SK-N-SH (cell line): ENCODE measurements at regions of chr17 and their contacts with region 1.

Region 1: GRCh38 chr17:58417300-58418092 is at the start of gene RNF43:
- DNase-seq: peak; percentile 90
- H3K4me3 ChIP-seq: peak within 1 kb of the TSS; percentile 33 to 50
- H3K27ac ChIP-seq: no peak within 1 kb of the TSS
- H3K4me1 ChIP-seq: peaks cover 0 to 6% of the 10 kb centered on the region in 2 experiments; a peak in 2 of 4 replicates
- H3K27me3 ChIP-seq: peaks cover 20% of the 10 kb centered on the region
- CTCF ChIP-seq: peak; percentile 79
- EP300 ChIP-seq: no peak
- RAD21 ChIP-seq: peak; percentile 87
- polyA plus RNA-seq, gene RNF43: not detected in 2 replicates

Region 2: DNA sequence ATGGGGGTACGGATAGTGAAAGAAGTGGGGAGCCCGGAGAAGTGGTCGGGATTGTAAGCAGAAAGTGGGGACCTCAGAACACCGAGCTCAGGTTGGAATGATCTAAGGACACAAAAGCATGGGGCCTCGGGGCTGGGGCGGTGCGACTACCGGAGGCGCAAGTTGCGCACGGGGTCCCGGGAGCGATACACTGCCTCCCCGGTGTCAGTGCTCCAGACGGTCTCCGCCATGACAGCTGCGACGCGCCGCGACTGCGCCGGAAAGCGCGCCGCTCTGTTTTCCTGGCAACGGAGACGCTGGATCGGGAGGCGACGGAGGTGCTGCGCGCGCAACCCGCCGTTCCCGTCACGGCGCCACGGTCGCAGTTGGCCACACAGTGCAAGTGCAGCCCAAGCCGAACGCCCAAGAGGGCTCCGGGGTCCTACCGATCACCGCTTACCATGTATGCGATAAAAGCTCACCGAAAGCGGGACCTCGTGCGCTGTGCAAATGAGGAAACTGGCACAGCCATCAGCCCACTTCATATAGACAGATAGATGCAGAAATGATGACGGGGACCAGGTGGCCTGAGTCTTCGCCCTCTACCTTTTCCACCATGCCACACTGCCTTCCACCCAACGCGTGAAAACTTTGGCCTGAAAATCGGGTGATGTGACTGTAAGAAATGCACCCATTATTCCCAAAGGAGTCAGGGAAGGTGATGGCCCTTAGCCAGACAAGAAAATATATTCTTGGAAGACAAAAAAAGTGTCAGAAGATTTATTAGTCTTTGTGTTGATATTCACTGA is 198.3 kb before region 1 on chr17 and contains the start of gene MKS1:
- CTCF ChIA-PET with region 1: interaction called, 13 read pairs
- POLR2A ChIA-PET with region 1: no interaction called
- DNase-seq: peak; percentile 100
- H3K4me3 ChIP-seq: peak within 1 kb of the TSS; percentile 79 to 87
- H3K27ac ChIP-seq: peak within 1 kb of the TSS; percentile 48 to 66
- H3K4me1 ChIP-seq: peaks cover 2 to 10% of the 10 kb centered on the region in 2 experiments; a peak in 1 of 4 replicates
- H3K27me3 ChIP-seq: no peaks in the 10 kb centered on the region
- CTCF ChIP-seq: peak; percentile 61
- EP300 ChIP-seq: no peak
- RAD21 ChIP-seq: no peak
- polyA plus RNA-seq, gene MKS1: 28.5 and 32.8 TPM in 2 replicates

Region 3: GRCh38 chr17:58310516-58311428 is 106.7 kb before region 1 on chr17:
- CTCF ChIA-PET with region 1: interaction called, 31 read pairs
- POLR2A ChIA-PET with region 1: no interaction called
- DNase-seq: peak; percentile 30
- H3K4me3 ChIP-seq: no peak overlapping the region
- H3K27ac ChIP-seq: no peak overlapping the region
- H3K4me1 ChIP-seq: no peaks in the 10 kb centered on the region
- H3K27me3 ChIP-seq: no peaks in the 10 kb centered on the region
- CTCF ChIP-seq: no peak
- EP300 ChIP-seq: no peak
- RAD21 ChIP-seq: no peak

Region 4: DNA sequence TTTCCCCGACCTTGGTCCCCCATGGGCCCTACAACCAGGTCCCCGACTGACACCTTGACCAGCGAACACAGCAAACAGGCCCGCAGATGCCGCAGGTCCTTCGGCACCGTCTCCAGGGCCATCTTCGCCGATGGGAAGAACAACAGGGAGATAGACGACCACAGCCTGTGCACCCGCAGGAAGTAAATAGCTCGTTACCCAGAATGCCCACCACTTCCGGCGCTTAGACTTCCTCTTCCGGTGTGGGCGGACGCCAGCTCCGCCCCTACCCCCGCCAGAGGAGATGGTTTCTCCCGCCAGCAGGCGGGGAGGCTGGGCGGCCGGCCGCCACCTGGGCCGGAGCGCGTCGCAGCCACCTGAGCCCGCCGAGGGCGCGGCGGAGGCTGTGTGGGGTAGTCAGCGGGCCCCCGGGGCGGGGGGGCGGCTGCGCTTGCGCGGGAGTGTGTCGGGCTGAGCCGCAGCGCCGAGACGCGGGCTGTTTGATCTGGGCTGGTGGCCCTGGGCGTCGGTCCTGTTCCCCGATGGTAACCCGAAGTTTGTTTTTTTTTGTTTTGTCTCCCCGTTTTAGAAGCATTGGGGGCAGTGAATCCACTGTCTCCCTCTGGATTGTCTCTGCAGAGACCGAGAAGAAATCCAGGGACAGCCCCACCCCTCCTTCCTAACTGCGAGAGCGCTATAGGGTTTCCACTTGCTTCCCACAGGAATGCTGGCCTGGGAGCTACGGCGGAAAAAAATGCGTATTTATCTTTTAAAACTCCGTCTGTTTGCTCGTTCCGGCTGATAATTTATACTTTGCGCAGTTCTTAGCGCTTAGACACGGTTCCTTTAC is 65.3 kb before region 1 on chr17 and contains the start of gene SUPT4H1:
- CTCF ChIA-PET with region 1: interaction called, 27 read pairs
- POLR2A ChIA-PET with region 1: interaction called, 17 read pairs
- DNase-seq: peak; percentile 99
- H3K4me3 ChIP-seq: peak within 1 kb of the TSS; percentile 74 to 99
- H3K27ac ChIP-seq: peak within 1 kb of the TSS; percentile 69 to 80
- H3K4me1 ChIP-seq: peaks cover 0 to 10% of the 10 kb centered on the region in 2 experiments; a peak in 2 of 4 replicates
- H3K27me3 ChIP-seq: no peaks in the 10 kb centered on the region
- CTCF ChIP-seq: no peak
- EP300 ChIP-seq: peak; percentile 1 to 51; a peak in 1 of 4 replicates
- RAD21 ChIP-seq: no peak
- polyA plus RNA-seq, gene SUPT4H1: 165 and 205 TPM in 2 replicates

Region 5: DNA sequence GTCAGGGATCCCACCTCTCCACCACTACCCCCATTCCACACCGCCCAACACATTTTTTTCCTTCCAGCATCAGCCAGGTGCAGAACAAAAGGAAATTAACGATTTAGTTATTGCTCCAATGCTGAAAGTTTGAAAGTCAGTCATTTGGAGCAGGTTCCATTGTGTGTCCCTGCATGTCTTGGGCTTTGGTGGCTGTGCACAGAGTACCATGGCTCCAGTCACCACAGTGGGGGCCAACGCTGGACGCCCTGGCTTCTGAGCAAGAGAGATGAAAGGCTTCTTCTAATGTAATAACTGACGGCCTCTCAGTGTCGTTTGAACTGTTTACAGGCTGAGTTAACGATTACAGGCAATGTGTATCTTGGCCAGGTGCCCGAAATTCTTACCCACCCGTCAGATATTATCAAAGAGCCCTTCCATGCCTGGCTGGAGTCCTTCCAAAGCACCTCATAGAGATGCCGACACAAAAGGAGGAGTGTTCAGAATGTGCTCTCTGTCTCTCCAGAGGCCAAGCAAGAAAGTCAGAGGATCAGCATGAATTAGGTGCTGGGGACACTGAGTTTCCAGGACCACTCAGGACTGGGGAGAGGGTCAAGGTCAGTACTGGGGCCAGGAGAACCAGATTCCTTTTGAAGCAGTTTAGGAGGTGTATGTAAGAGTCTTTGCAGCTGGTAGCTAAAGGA is 26.1 kb before region 1 on chr17:
- CTCF ChIA-PET with region 1: interaction called, 12 read pairs
- POLR2A ChIA-PET with region 1: no interaction called
- DNase-seq: peak; percentile 75
- H3K4me3 ChIP-seq: no peak overlapping the region
- H3K27ac ChIP-seq: no peak overlapping the region
- H3K4me1 ChIP-seq: peaks cover 0 to 10% of the 10 kb centered on the region in 2 experiments; a peak in 2 of 4 replicates
- H3K27me3 ChIP-seq: peaks cover 44% of the 10 kb centered on the region
- CTCF ChIP-seq: no peak
- EP300 ChIP-seq: peak in 1 of 2 experiments; percentile 53; a peak in 1 of 4 replicates
- RAD21 ChIP-seq: peak; percentile 10; the same call in 1 of the 2 replicates

Region 6: GRCh38 chr17:58432806-58433572 is 15.5 kb after region 1 on chr17:
- CTCF ChIA-PET with region 1: interaction called, 44 read pairs
- POLR2A ChIA-PET with region 1: no interaction called
- DNase-seq: no peak
- H3K4me3 ChIP-seq: no peak overlapping the region
- H3K27ac ChIP-seq: no peak overlapping the region
- H3K4me1 ChIP-seq: no peaks in the 10 kb centered on the region
- H3K27me3 ChIP-seq: no peaks in the 10 kb centered on the region; the same call in 1 of the 2 replicates
- CTCF ChIP-seq: no peak
- EP300 ChIP-seq: no peak
- RAD21 ChIP-seq: no peak